Panc1 (cell line): ENCODE measurements at regions of chr5 and their contacts with region 1.

Region 1: GRCh38 chr5:139439013-139439903 is at the start of gene DNAJC18:
- DNase-seq: peak; percentile 46
- ATAC-seq: peak; percentile 99
- H3K4me3 ChIP-seq: peak within 1 kb of the TSS; percentile 79 to 94
- H3K27ac ChIP-seq: peak within 1 kb of the TSS; percentile 79
- H3K4me1 ChIP-seq: peaks cover 3% of the 10 kb centered on the region; the same call in 1 of the 2 replicates
- H3K27me3 ChIP-seq: no peaks in the 10 kb centered on the region; the same call in 1 of the 2 replicates
- CTCF ChIP-seq: no peak
- total RNA-seq, gene DNAJC18: 8.8 TPM

Region 2: GRCh38 chr5:139422307-139422893 is 16.9 kb before region 1 on chr5:
- CTCF ChIA-PET with region 1: no interaction called
- POLR2A ChIA-PET with region 1: interaction called, 10 read pairs
- in situ Hi-C with region 1: no loop called
- intact Hi-C with region 1: no loop called
- DNase-seq: peak; percentile 63
- ATAC-seq: peak; percentile 85
- H3K4me3 ChIP-seq: no peak overlapping the region
- H3K27ac ChIP-seq: no peak overlapping the region
- H3K4me1 ChIP-seq: no peaks in the 10 kb centered on the region
- H3K27me3 ChIP-seq: no peaks in the 10 kb centered on the region
- CTCF ChIP-seq: peak; percentile 87

Region 3: GRCh38 chr5:139458580-139459406 is 19.5 kb after region 1 on chr5:
- CTCF ChIA-PET with region 1: no interaction called
- POLR2A ChIA-PET with region 1: no interaction called
- in situ Hi-C with region 1: no loop called
- intact Hi-C with region 1: no loop called
- DNase-seq: no peak
- ATAC-seq: peak; percentile 45; the same call in 1 of the 2 replicates
- H3K4me3 ChIP-seq: no peak overlapping the region
- H3K27ac ChIP-seq: no peak overlapping the region
- H3K4me1 ChIP-seq: no peaks in the 10 kb centered on the region
- H3K27me3 ChIP-seq: no peaks in the 10 kb centered on the region
- CTCF ChIP-seq: no peak